ENCODE measurements at regions of chr6 and their contacts with region 1.

Region 1: GRCh38 chr6:161133963-161134362 is 139.9 kb downstream of the AGPAT4 start:
- DNase-seq: no peak

Region 2: GRCh38 chr6:161066511-161066910 is 67.5 kb before region 1 on chr6:
- intact Hi-C with region 1: no loop called
- DNase-seq: no peak

Region 3: GRCh38 chr6:161788531-161788930 is 654.6 kb after region 1 on chr6:
- intact Hi-C with region 1: loop called in 1 of 2 experiments (anchors 5 kb)
- DNase-seq: no peak

Measured in posterior vena cava (tissue), 2 donors.